Left ventricle myocardium inferior (tissue), 1 donor: ENCODE measurements at regions of chr6 and their contacts with region 1.

Region 1: DNA sequence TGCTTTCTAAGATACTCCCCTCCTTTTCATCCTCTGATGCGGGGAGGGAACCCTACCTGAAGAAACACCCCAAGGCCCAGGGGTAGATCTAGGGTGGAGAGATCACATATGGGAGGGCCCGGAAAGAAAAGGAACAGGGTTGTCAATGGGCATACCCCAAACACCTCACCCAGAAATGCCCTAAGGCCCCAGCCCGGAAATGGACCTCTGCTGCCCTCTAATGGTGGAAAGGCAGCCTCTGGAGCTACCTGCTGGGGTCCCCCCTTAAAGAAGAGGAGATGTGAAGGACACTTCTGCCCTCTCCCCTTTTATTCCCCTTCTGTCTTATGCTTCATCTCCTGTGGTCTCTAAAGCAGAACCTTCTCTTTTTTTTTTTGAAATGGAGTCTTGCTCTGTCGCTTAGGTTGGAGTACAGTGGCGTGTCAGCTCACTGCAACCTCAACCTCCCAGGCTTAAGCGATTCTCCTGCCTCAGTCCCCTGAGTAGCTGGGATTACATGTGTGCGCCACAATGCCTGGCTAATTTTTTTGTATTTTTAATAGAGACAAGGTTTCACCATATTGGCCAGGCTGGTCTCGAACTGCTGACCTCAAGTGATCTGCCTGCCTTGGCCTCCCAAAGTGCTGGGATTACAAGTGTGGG is 458 bp upstream of the ARMC12 start:
- DNase-seq: peak; percentile 78
- H3K4me3 ChIP-seq: no peak overlapping the region
- H3K27ac ChIP-seq: no peak overlapping the region
- H3K4me1 ChIP-seq: peaks cover 57% of the 10 kb centered on the region
- H3K27me3 ChIP-seq: no peaks in the 10 kb centered on the region
- CTCF ChIP-seq: peak; percentile 95

Region 2: GRCh38 chr6:35522660-35523658 is 213.4 kb before region 1 on chr6:
- intact Hi-C with region 1: loop called (anchors 5 kb)
- DNase-seq: peak; percentile 62
- H3K4me3 ChIP-seq: peak overlapping the region; percentile 50
- H3K27ac ChIP-seq: no peak overlapping the region
- H3K4me1 ChIP-seq: no peaks in the 10 kb centered on the region
- H3K27me3 ChIP-seq: peaks cover 7% of the 10 kb centered on the region
- CTCF ChIP-seq: peak; percentile 100

Region 3: GRCh38 chr6:35583893-35584688 is 152.3 kb before region 1 on chr6:
- intact Hi-C with region 1: loop called (anchors 1 kb)
- DNase-seq: no peak
- H3K4me3 ChIP-seq: no peak overlapping the region
- H3K27ac ChIP-seq: peak overlapping the region; percentile 72
- H3K4me1 ChIP-seq: peaks cover 57% of the 10 kb centered on the region
- H3K27me3 ChIP-seq: no peaks in the 10 kb centered on the region
- CTCF ChIP-seq: peak; percentile 85

Region 4: DNA sequence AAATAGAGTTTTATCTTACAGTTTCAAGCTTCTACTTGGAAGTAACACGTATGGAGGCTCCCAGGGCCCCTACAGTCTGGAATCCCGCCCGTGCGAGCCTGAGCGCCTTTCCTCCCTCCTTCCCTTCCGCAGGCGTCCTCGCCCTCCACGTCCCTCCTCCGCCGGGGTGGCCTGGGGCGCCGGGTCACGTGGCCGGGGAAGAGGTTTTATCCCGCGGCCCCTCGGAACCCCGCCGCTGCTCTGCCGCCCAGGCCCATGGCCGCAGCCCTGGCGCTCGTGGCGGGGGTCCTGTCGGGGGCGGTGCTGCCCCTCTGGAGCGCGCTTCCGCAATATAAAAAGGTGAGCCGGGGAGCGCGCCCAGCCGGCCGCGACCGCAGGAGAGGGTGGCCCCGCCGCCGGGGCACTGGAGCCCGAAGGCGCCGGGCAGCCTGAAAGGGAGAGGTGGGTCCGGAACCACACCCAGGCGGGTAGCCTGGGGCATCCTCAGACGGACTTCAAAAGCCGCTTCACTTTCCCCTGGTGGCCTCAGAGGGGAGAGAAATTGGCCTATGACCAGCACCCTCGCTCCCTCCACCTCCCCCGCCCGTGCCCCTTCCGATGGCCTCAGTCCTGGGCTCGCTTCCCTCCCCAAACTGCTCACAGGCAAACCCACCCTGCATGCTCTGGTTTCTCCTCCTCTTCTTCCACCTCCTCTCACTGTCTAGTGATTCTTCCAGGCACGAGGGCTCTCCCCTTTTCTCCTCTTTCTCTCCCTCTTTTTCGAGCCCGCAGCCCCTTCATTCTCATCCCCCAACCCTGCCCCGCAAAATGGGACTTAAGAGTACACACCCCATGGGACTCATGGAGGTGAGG is 40.2 kb after region 1 on chr6 and contains the start of gene CLPSL2:
- intact Hi-C with region 1: no loop called
- DNase-seq: no peak
- H3K4me3 ChIP-seq: peak within 1 kb of the TSS; percentile 65
- H3K27ac ChIP-seq: no peak within 1 kb of the TSS
- H3K4me1 ChIP-seq: peaks cover 8% of the 10 kb centered on the region
- H3K27me3 ChIP-seq: peaks cover 88% of the 10 kb centered on the region
- CTCF ChIP-seq: no peak
- total RNA-seq, gene CLPSL2: not detected

Region 5: GRCh38 chr6:36423101-36423824 is 686.9 kb after region 1 on chr6:
- intact Hi-C with region 1: no loop called
- DNase-seq: peak; percentile 99
- H3K4me3 ChIP-seq: peak overlapping the region; percentile 69
- H3K27ac ChIP-seq: peak overlapping the region; percentile 78
- H3K4me1 ChIP-seq: peaks cover 15% of the 10 kb centered on the region
- H3K27me3 ChIP-seq: no peaks in the 10 kb centered on the region
- CTCF ChIP-seq: peak; percentile 72